ENCODE measurements at regions of chr3 and their contacts with region 1.

Region 1: GRCh38 chr3:154954753-154955152 is 125.4 kb upstream of the MME start:
- DNase-seq: peak; percentile 53
- H3K4me3 ChIP-seq: no peak overlapping the region
- H3K27ac ChIP-seq: no peak overlapping the region
- H3K4me1 ChIP-seq: no peaks in the 10 kb centered on the region
- H3K27me3 ChIP-seq: no peaks in the 10 kb centered on the region
- CTCF ChIP-seq: peak; percentile 18 to 50
- POLR2A ChIP-seq: no peak

Region 2: DNA sequence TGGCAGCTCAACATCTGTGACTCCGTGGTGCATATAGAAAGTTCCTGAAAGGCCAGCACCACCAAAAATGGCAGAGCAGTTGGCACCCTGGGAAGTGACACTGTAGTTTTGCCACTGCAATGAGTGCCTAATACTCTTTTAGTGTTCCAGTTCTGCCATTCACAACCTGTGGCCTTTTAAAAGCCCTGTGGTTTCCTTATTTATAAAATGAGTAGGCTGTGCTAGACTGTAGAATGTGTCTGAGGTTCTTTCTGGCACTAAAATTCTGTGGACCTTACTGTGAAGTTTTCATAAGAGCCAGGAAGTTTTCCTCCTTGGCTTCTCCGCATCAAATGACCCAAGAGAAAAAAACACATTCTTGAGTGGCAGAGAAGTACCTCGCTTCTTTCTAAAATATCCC is 199.5 kb after region 1 on chr3:
- CTCF ChIA-PET with region 1: no interaction called
- POLR2A ChIA-PET with region 1: no interaction called
- dilution Hi-C with region 1: no loop called
- intact Hi-C with region 1: no loop called
- DNase-seq: no peak
- H3K4me3 ChIP-seq: no peak overlapping the region
- H3K27ac ChIP-seq: no peak overlapping the region
- H3K4me1 ChIP-seq: no peaks in the 10 kb centered on the region
- H3K27me3 ChIP-seq: no peaks in the 10 kb centered on the region
- CTCF ChIP-seq: no peak
- POLR2A ChIP-seq: no peak

Region 3: DNA sequence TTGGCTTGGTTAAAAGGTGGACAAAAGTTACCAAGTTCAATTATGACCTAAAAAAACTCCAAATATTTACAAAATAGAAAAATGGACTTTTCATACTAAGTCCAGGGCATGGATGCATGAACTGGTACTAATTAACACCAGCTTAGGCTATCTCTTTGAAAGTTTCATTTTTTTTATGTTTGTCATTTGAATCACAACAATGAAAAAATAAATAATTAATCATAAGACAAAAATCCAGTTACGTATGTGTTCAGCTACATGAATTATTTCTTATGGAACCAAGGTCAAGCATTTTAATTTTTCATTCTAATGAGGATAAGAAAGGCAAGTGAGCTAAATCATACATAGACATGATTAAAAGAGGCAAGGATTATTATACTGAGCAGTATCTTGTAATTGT is 362.5 kb after region 1 on chr3:
- CTCF ChIA-PET with region 1: interaction called, 68 read pairs
- POLR2A ChIA-PET with region 1: no interaction called
- dilution Hi-C with region 1: no loop called
- intact Hi-C with region 1: no loop called
- DNase-seq: no peak
- H3K4me3 ChIP-seq: no peak overlapping the region
- H3K27ac ChIP-seq: no peak overlapping the region
- H3K4me1 ChIP-seq: no peaks in the 10 kb centered on the region
- H3K27me3 ChIP-seq: no peaks in the 10 kb centered on the region
- CTCF ChIP-seq: no peak
- POLR2A ChIP-seq: no peak

Region 4: GRCh38 chr3:155495387-155495786 is 540.6 kb after region 1 on chr3:
- CTCF ChIA-PET with region 1: no interaction called
- POLR2A ChIA-PET with region 1: no interaction called
- dilution Hi-C with region 1: no loop called
- intact Hi-C with region 1: no loop called
- DNase-seq: no peak
- H3K4me3 ChIP-seq: no peak overlapping the region
- H3K27ac ChIP-seq: no peak overlapping the region
- H3K4me1 ChIP-seq: no peaks in the 10 kb centered on the region
- H3K27me3 ChIP-seq: no peaks in the 10 kb centered on the region
- CTCF ChIP-seq: no peak
- POLR2A ChIP-seq: no peak

Region 5: DNA sequence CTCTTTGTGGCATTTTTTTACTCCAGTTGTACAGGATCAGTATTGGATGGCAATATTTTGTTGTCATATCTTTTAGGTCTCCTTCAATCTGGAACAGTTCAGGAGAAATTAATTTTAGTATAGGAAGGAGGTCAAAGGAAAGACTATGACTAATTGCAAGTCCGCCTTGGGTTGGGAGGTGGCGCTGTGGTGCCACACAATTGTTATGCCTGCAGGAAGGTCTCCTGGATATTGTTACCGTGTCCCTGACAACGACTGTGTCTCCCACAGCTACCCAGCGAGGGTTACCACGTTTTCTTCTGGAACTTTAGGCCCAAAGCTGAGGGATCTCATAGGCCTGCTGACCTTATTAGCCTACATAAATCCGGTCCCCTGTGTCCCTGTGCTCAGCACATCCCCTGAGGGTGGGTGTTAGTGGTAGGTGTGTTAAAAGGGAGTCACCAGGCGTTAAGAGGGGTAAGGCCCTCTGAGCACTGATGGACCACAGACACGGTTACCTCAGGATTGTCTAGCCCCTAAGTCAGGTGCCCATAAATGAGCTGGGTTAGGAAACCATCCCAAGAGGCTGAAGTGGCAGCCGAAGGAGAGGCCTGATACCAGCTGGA is 1197.2 kb after region 1 on chr3:
- CTCF ChIA-PET with region 1: no interaction called
- POLR2A ChIA-PET with region 1: no interaction called
- dilution Hi-C with region 1: no loop called
- intact Hi-C with region 1: no loop called
- DNase-seq: peak; percentile 75
- H3K4me3 ChIP-seq: no peak overlapping the region
- H3K27ac ChIP-seq: no peak overlapping the region
- H3K4me1 ChIP-seq: peaks cover 19% of the 10 kb centered on the region
- H3K27me3 ChIP-seq: peaks cover 0 to 1% of the 10 kb centered on the region in 2 experiments
- CTCF ChIP-seq: peak; percentile 77 to 81
- POLR2A ChIP-seq: no peak